H1 (cell line): ENCODE measurements at regions of chr12 and their contacts with region 1.

Region 1: GRCh38 chr12:89542912-89543592 is 17.2 kb upstream of the POC1B start:
- DNase-seq: peak; percentile 53 to 79
- H3K4me3 ChIP-seq: no peak overlapping the region
- H3K27ac ChIP-seq: no peak overlapping the region
- H3K4me1 ChIP-seq: no peaks in the 10 kb centered on the region; a peak in 1 of 7 replicates
- H3K27me3 ChIP-seq: no peaks in the 10 kb centered on the region
- CTCF ChIP-seq: peak; percentile 65 to 90 (median 77)
- EP300 ChIP-seq: no peak
- POLR2A ChIP-seq: no peak
- RAD21 ChIP-seq: peak; percentile 96 to 97

Region 2: GRCh38 chr12:89701606-89702206 is 158.7 kb after region 1 on chr12:
- CTCF ChIA-PET with region 1: interaction called, 12 read pairs
- POLR2A ChIA-PET with region 1: no interaction called
- DNase-seq: no peak
- H3K4me3 ChIP-seq: no peak overlapping the region
- H3K27ac ChIP-seq: no peak overlapping the region
- H3K4me1 ChIP-seq: no peaks in the 10 kb centered on the region
- H3K27me3 ChIP-seq: peaks cover 0 to 11% (median 4%) of the 10 kb centered on the region in 4 experiments; a peak in 4 of 7 replicates
- CTCF ChIP-seq: peak in 1 of 3 experiments; percentile 21; a peak in 1 of 4 replicates
- EP300 ChIP-seq: no peak
- POLR2A ChIP-seq: no peak
- RAD21 ChIP-seq: no peak; a peak in 1 of 4 replicates

Region 3: GRCh38 chr12:90013409-90013808 is 470.4 kb after region 1 on chr12:
- CTCF ChIA-PET with region 1: interaction called, 12 read pairs
- POLR2A ChIA-PET with region 1: interaction called, 3 read pairs
- DNase-seq: no peak
- H3K4me3 ChIP-seq: no peak overlapping the region
- H3K27ac ChIP-seq: no peak overlapping the region
- H3K4me1 ChIP-seq: no peaks in the 10 kb centered on the region
- H3K27me3 ChIP-seq: no peaks in the 10 kb centered on the region
- CTCF ChIP-seq: peak; percentile 41 to 67 (median 56)
- EP300 ChIP-seq: no peak
- POLR2A ChIP-seq: no peak
- RAD21 ChIP-seq: peak; percentile 75 to 84